GM13977 (cell line): ENCODE measurements at regions of chr6 and their contacts with region 1.

Region 1: GRCh38 chr6:156564127-156564806 is 212.9 kb upstream of the ARID1B start:
- DNase-seq: peak; percentile 83
- CTCF ChIP-seq: peak; percentile 93

Region 2: DNA sequence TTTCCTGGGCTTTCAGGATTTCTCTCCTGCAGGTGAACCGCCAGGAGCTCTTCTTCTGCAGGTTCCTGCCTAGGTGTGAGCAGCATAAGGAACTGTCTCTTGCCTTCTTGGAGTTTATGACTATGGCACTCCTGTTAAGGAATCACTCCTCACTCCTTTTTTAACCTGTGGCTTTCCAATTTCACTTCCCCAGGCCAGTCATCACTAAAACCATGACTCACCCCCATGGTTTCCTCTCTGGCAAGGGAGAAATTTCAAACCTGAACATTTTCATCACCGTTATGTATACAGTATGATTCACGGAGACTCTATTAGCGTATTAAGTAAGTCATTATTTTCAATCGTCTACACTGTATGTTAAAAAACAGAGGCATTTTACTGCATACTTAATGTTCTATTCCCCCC is 134.8 kb after region 1 on chr6:
- in situ Hi-C with region 1: loop called (anchors 10 kb)
- DNase-seq: no peak
- CTCF ChIP-seq: no peak

Region 3: DNA sequence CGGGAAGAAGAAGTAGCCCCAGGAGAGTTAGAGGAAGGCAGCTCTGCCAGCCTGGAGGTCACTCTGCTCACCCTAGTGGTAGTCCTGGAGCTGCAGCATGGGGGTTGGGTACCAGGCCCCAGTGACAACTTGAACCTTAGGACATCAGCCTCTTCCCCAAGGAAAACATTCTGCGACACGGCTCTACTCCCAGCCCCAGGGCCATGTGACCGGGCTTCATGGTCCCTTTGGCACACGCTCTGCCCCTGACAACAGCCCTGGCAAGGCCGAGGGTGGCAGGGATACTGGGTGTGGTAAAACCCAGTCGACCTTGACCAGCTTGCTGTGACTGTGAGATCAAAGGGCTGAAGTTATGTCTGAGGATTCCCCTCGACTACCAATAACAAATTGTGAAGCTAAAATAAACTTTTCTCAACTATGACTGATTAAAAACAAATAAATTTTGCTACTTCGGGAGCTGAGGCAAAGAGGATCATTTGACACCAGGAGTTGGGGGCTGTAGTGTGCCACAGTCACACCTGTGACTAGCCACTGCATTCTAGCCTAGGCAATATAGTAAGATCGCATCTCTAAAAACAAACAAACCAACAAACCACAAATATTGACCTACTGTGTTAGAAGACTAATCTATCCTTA is 188.5 kb after region 1 on chr6:
- in situ Hi-C with region 1: loop called (anchors 25 kb)
- DNase-seq: peak; percentile 40
- CTCF ChIP-seq: peak; percentile 52